ENCODE measurements at regions of chr2 and their contacts with region 1.

Region 1: GRCh38 chr2:64523666-64524603 is at the start of gene AFTPH:
- DNase-seq: peak; percentile 99 to 100 (median 99)
- ATAC-seq: peak; percentile 88
- H3K4me3 ChIP-seq: peak within 1 kb of the TSS; percentile 69 to 83
- H3K4me3 Mint-ChIP-seq: peak within 1 kb of the TSS; percentile 99
- H3K27ac ChIP-seq: peak within 1 kb of the TSS; percentile 77 to 89
- H3K27ac Mint-ChIP-seq: peak within 1 kb of the TSS; percentile 99
- H3K4me1 ChIP-seq: peaks cover 20% of the 10 kb centered on the region
- H3K4me1 Mint-ChIP-seq: peaks cover 38% of the 10 kb centered on the region
- H3K27me3 ChIP-seq: no peaks in the 10 kb centered on the region
- H3K27me3 Mint-ChIP-seq: no peaks in the 10 kb centered on the region
- CTCF ChIP-seq: no peak
- total RNA-seq, gene AFTPH: 23.0 to 25.9 TPM

Region 2: DNA sequence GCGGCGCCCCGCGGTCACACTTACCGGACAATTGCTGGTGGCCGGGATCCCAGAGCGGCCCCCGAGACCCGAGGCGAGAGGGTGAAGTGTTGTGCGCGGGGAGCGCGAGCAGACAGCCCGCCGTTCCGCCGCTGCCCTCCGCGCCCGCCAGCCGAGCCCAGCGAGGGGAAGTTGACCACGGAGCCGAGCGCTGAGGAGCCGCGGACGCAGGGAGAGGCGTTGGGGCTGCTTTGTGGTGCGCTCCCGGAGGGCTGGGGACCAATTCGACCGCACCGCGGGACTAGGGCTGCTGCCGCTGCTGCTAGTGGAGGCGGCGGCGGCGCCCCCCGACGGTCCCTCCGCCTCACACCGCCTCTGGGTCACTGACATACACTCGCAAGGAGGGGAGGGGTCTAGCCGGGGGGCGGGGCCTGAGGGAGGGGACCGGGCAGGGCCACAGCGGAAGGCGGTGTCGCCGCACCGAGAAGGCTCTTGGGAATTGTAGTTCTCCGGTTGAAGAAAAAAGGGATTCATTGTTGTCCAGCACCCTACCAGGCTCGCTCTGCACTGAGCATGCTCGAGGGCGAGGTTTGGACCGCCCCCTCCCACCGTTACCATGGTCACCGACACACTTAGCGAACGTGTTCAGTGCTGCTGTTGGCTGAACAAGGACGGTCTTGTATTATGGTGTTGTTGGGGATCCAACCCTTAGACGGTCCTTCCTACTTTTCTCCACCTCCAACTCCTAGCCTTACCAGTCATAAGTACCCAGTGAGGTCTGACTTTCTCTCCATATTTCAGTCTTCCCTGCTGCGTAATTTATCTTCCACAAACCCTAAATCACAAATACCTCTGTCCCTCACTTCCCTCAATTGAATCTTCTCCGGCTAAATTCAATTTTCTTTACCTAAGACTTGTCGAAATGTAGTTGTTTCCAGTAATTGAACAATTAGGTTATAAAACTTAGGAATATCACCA is 379.6 kb before region 1 on chr2 and contains the start of gene PELI1:
- CTCF ChIA-PET with region 1: no interaction called
- POLR2A ChIA-PET with region 1: interaction called, 4 read pairs
- intact Hi-C with region 1: loop called (anchors 1 to 2 kb)
- DNase-seq: peak; percentile 86 to 94 (median 91)
- ATAC-seq: peak; percentile 93
- H3K4me3 ChIP-seq: peak within 1 kb of the TSS; percentile 86 to 87
- H3K4me3 Mint-ChIP-seq: peak within 1 kb of the TSS; percentile 98
- H3K27ac ChIP-seq: peak within 1 kb of the TSS; percentile 78 to 91
- H3K27ac Mint-ChIP-seq: peak within 1 kb of the TSS; percentile 99
- H3K4me1 ChIP-seq: peaks cover 13% of the 10 kb centered on the region
- H3K4me1 Mint-ChIP-seq: peaks cover 34% of the 10 kb centered on the region
- H3K27me3 ChIP-seq: no peaks in the 10 kb centered on the region
- H3K27me3 Mint-ChIP-seq: no peaks in the 10 kb centered on the region
- CTCF ChIP-seq: no peak
- total RNA-seq, gene PELI1: 213 to 216 TPM

Region 3: DNA sequence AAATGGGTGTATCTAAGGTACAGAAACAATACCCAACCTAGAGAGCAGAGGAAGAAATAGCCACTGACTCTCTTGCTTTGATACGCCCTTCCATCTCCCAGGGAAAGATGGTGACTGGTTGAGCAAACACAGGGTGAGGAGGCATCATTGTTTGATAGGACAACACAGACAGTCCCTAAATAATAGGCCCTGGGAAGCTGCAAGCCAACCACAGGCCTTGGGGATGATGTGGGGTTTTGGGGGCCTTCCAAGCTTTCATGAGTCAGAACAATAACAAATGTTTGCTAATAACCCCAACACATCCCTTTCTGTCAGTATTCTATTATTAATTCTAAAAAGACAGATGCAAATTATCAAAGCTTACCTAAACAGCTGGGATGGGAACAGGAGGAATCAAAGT is 60.2 kb before region 1 on chr2:
- CTCF ChIA-PET with region 1: no interaction called
- POLR2A ChIA-PET with region 1: no interaction called
- intact Hi-C with region 1: no loop called
- DNase-seq: no peak
- ATAC-seq: no peak
- H3K4me3 ChIP-seq: no peak overlapping the region
- H3K4me3 Mint-ChIP-seq: no peak overlapping the region
- H3K27ac ChIP-seq: no peak overlapping the region
- H3K27ac Mint-ChIP-seq: no peak overlapping the region
- H3K4me1 ChIP-seq: no peaks in the 10 kb centered on the region
- H3K4me1 Mint-ChIP-seq: no peaks in the 10 kb centered on the region
- H3K27me3 ChIP-seq: no peaks in the 10 kb centered on the region
- H3K27me3 Mint-ChIP-seq: no peaks in the 10 kb centered on the region
- CTCF ChIP-seq: no peak

Region 4: DNA sequence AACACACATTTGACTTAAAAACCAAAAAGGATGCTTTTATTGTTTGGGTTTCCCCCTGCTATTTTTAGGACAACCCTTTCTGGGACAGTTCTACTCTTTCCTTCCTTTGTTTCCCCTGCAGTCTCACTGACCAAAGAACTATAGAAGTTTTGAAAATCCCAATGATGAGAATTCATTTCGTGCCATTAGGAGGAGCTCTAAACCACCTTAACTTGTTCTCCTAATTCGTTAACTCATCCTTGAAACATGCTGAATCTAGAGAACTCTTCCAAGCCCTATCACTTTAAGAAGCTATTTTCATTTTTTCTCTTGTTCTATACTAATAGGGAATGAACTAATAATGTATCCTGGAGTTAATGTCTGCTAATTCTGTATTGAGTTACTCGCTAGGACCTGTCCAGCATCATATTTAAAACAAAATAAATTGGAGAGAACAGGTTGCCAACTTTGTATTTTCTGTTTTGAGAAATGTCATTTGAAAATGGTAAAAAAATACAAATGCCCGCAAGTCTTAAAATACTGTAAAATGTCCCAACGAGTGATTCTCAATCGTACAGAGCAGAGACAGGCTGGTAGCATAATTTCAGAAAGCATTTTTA is 63.0 kb after region 1 on chr2:
- CTCF ChIA-PET with region 1: interaction called, 20 read pairs
- POLR2A ChIA-PET with region 1: interaction called, 5 read pairs
- intact Hi-C with region 1: no loop called
- DNase-seq: peak in 2 of 9 experiments; percentile 57 to 70
- ATAC-seq: peak; percentile 75
- H3K4me3 ChIP-seq: no peak overlapping the region
- H3K4me3 Mint-ChIP-seq: no peak overlapping the region
- H3K27ac ChIP-seq: no peak overlapping the region
- H3K27ac Mint-ChIP-seq: no peak overlapping the region
- H3K4me1 ChIP-seq: no peaks in the 10 kb centered on the region
- H3K4me1 Mint-ChIP-seq: no peaks in the 10 kb centered on the region
- H3K27me3 ChIP-seq: no peaks in the 10 kb centered on the region
- H3K27me3 Mint-ChIP-seq: no peaks in the 10 kb centered on the region
- CTCF ChIP-seq: peak; percentile 87

Region 5: GRCh38 chr2:64750817-64751285 is 226.9 kb after region 1 on chr2:
- CTCF ChIA-PET with region 1: interaction called, 4 read pairs
- POLR2A ChIA-PET with region 1: interaction called, 7 read pairs
- intact Hi-C with region 1: loop called (anchors 1 kb)
- DNase-seq: peak; percentile 95 to 100 (median 97)
- ATAC-seq: peak; percentile 81
- H3K4me3 ChIP-seq: peak overlapping the region; percentile 86 to 99
- H3K4me3 Mint-ChIP-seq: peak overlapping the region; percentile 99
- H3K27ac ChIP-seq: peak overlapping the region; percentile 88 to 95
- H3K27ac Mint-ChIP-seq: peak overlapping the region; percentile 95
- H3K4me1 ChIP-seq: peaks cover 19% of the 10 kb centered on the region
- H3K4me1 Mint-ChIP-seq: peaks cover 31% of the 10 kb centered on the region
- H3K27me3 ChIP-seq: no peaks in the 10 kb centered on the region
- H3K27me3 Mint-ChIP-seq: no peaks in the 10 kb centered on the region
- CTCF ChIP-seq: no peak

Region 6: DNA sequence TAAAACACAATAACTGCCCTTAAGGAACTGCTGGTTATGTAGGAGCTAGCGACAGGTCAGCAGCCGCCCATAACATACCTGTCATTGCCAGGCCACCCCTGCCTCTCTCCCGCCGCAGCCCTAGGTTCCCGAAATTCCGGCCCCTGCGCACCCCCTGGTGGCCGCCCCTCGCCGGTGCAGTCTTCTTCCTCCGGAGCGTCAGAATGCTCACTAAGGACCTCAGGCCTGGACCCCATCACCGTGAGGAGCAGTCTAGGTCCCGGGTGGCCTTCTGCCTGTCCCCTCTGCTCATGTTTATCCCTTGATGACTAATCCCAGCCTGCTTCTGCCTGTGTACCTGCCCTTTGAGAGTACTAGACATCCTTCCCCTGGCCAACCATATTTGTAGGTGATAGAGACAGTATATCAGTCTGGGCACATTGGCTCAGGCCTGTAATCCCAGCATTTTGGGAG is 349.6 kb after region 1 on chr2:
- CTCF ChIA-PET with region 1: interaction called, 15 read pairs
- POLR2A ChIA-PET with region 1: no interaction called
- intact Hi-C with region 1: loop called (anchors 1 to 2 kb)
- DNase-seq: peak; percentile 59 to 88 (median 78)
- ATAC-seq: peak; percentile 99
- H3K4me3 ChIP-seq: peak overlapping the region in 1 of 2 experiments; percentile 13
- H3K4me3 Mint-ChIP-seq: peak overlapping the region; percentile 20
- H3K27ac ChIP-seq: no peak overlapping the region
- H3K27ac Mint-ChIP-seq: no peak overlapping the region
- H3K4me1 ChIP-seq: peaks cover 4% of the 10 kb centered on the region
- H3K4me1 Mint-ChIP-seq: peaks cover 6% of the 10 kb centered on the region
- H3K27me3 ChIP-seq: no peaks in the 10 kb centered on the region
- H3K27me3 Mint-ChIP-seq: peaks cover 4% of the 10 kb centered on the region
- CTCF ChIP-seq: peak; percentile 88

Region 7: DNA sequence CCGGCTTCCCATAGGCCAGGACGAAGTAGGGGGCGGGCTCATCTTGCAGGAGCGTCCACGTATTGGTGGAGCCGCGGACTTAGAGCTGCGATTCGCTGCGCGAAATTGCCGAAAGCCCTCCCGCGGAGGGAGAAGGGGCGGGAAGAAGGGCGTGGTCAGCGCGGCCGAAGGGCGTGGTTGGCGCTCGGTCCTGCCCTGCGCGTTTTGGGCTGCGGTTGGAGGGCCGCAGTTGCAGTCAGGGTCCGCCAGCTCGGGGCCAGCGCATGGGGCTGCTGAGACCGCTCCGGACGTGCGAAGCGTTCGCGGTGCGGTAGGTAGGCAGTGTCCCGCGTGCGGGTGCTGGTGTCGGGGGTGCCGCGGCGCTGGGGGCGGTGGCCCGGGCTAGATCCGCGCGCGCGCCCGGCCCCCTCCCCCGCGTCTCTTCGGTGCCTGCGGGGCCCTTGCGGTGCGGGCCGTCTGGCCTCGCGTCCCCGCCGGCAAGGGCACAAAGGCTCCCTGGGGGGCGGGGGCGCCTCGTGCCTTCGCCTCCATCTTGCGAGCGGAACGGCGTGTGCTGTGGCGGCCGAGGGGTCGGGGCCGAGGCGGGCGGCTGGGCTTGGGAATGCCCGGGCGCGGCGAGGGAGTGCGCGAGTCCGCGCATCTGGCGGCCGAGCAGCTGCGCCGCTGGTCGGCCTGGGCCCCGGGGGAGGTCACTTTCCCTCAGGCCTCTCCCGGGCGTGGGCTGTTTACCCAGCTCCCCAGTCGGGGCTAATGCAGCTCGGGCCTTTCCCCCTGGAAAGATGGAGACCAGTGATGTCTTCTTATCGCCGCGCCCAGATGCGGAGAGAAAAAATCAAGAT is 532.5 kb after region 1 on chr2 and contains the start of gene CEP68:
- CTCF ChIA-PET with region 1: no interaction called
- POLR2A ChIA-PET with region 1: interaction called, 5 read pairs
- intact Hi-C with region 1: loop called (anchors 1 to 2 kb)
- DNase-seq: peak; percentile 89 to 98 (median 96)
- ATAC-seq: peak; percentile 89
- H3K4me3 ChIP-seq: peak within 1 kb of the TSS; percentile 85 to 86
- H3K4me3 Mint-ChIP-seq: peak within 1 kb of the TSS; percentile 99
- H3K27ac ChIP-seq: peak within 1 kb of the TSS; percentile 62 to 72
- H3K27ac Mint-ChIP-seq: peak within 1 kb of the TSS; percentile 97
- H3K4me1 ChIP-seq: peaks cover 70% of the 10 kb centered on the region
- H3K4me1 Mint-ChIP-seq: peaks cover 73% of the 10 kb centered on the region
- H3K27me3 ChIP-seq: no peaks in the 10 kb centered on the region
- H3K27me3 Mint-ChIP-seq: no peaks in the 10 kb centered on the region
- CTCF ChIP-seq: no peak
- total RNA-seq, gene CEP68: 19.9 to 20.5 TPM

Region 8: DNA sequence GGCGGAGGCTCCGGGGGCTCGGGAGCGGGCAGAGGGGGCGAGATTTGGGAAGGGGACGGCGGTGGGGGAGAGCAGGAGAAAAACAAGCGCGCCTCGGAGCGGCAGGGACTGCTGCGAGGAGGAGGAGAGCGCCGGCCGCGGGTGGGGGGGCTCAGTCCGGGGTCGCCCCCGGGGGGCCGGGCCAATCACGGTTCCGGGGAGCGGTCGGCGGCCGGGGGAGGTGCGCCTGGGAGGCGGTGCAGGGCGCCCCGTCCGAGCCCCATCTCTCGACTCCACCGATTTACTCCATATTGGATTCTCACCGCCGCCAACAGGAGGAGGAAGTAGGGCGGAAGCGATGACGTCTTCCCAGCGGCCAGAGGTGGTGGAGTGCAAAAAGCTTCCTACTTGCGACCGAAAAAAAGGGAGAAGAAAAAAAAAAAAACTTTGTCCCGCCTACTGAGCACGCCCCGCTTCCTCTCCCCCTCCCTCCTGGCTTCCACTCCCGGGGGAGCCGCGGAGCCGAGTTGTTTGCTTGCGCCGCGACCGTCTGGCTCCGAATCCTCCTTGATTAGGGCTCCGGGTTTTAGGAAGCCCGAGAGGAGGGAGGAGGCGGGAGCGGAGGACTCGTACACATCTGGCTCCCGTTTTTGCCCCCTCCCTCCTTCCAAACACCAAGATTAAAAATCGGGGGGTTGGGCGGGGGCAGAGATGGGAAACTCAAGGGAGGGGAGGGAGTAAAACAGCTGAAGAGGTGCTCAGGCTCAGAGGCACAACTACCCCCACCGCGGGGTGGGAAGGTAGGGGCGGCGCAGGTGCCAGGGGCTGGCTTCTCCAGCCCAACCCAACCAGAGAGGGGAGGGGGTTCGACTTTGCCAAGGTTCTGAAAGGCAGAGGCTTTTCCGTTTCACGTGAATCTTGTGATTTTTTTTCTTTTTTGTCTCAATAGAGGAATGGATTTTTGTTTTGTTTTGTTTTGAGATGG is 908.6 kb after region 1 on chr2 and contains the start of gene SPRED2:
- CTCF ChIA-PET with region 1: no interaction called
- POLR2A ChIA-PET with region 1: no interaction called
- intact Hi-C with region 1: loop called (anchors 2 to 5 kb)
- DNase-seq: peak in 8 of 9 experiments; percentile 37 to 88 (median 64)
- ATAC-seq: peak; percentile 34
- H3K4me3 ChIP-seq: peak within 1 kb of the TSS; percentile 81 to 91
- H3K4me3 Mint-ChIP-seq: peak within 1 kb of the TSS; percentile 88
- H3K27ac ChIP-seq: peak within 1 kb of the TSS in 1 of 2 experiments; percentile 31
- H3K27ac Mint-ChIP-seq: peak within 1 kb of the TSS; percentile 29
- H3K4me1 ChIP-seq: peaks cover 32% of the 10 kb centered on the region
- H3K4me1 Mint-ChIP-seq: peaks cover 22% of the 10 kb centered on the region
- H3K27me3 ChIP-seq: peaks cover 18 to 31% of the 10 kb centered on the region in 2 experiments
- H3K27me3 Mint-ChIP-seq: peaks cover 38% of the 10 kb centered on the region
- CTCF ChIP-seq: no peak
- total RNA-seq, gene SPRED2: 2.3 to 2.5 TPM